GM12878 (cell line): ENCODE measurements at regions of chr20 and their contacts with region 1.

Region 1: GRCh38 chr20:63864847-63865640 is at the start of gene TPD52L2:
- DNase-seq: peak; percentile 94
- ATAC-seq: peak; percentile 91
- H3K4me3 ChIP-seq: peak within 1 kb of the TSS; percentile 96
- H3K27ac ChIP-seq: peak within 1 kb of the TSS; percentile 90
- H3K4me1 ChIP-seq: peaks cover 7% of the 10 kb centered on the region
- H3K27me3 ChIP-seq: no peaks in the 10 kb centered on the region
- CTCF ChIP-seq: no peak
- EP300 ChIP-seq: 0 out of 4 replicates have a peak, but pooled peaks of 1 of the 2 experiments have one; percentile 19
- POLR2A ChIP-seq: peak; percentile 96
- RAD21 ChIP-seq: no peak
- polyA plus RNA-seq, gene TPD52L2: 1.6 to 4.1 TPM

Region 2: GRCh38 chr20:63739130-63740069 is 125.6 kb before region 1 on chr20 and contains the start of gene SLC2A4RG:
- CTCF ChIA-PET with region 1: interaction called, 6 read pairs
- POLR2A ChIA-PET with region 1: interaction called, 4 read pairs
- RAD21 ChIA-PET with region 1: interaction called, 5 read pairs
- SMC1A ChIA-PET with region 1: no interaction called
- in situ Hi-C with region 1: no loop called
- intact Hi-C with region 1: loop called (anchors 2 kb)
- DNase-seq: no peak
- ATAC-seq: peak; percentile 55
- H3K4me3 ChIP-seq: peak within 1 kb of the TSS; percentile 84
- H3K27ac ChIP-seq: peak within 1 kb of the TSS; percentile 72
- H3K4me1 ChIP-seq: peaks cover 33% of the 10 kb centered on the region
- H3K27me3 ChIP-seq: no peaks in the 10 kb centered on the region
- CTCF ChIP-seq: no peak
- EP300 ChIP-seq: no peak
- POLR2A ChIP-seq: no peak
- RAD21 ChIP-seq: no peak
- polyA plus RNA-seq, gene SLC2A4RG: 0.34 to 2.8 TPM

Region 3: GRCh38 chr20:63785691-63786131 is 79.3 kb before region 1 on chr20:
- CTCF ChIA-PET with region 1: interaction called, 38 read pairs
- POLR2A ChIA-PET with region 1: no interaction called
- RAD21 ChIA-PET with region 1: interaction called, 18 read pairs
- SMC1A ChIA-PET with region 1: interaction called, 19 read pairs
- in situ Hi-C with region 1: no loop called
- intact Hi-C with region 1: loop called (anchors 2 kb)
- DNase-seq: no peak
- ATAC-seq: no peak
- H3K4me3 ChIP-seq: no peak overlapping the region
- H3K27ac ChIP-seq: no peak overlapping the region
- H3K4me1 ChIP-seq: peaks cover 8% of the 10 kb centered on the region
- H3K27me3 ChIP-seq: no peaks in the 10 kb centered on the region
- CTCF ChIP-seq: no peak
- EP300 ChIP-seq: no peak
- POLR2A ChIP-seq: no peak
- RAD21 ChIP-seq: no peak

Region 4: DNA sequence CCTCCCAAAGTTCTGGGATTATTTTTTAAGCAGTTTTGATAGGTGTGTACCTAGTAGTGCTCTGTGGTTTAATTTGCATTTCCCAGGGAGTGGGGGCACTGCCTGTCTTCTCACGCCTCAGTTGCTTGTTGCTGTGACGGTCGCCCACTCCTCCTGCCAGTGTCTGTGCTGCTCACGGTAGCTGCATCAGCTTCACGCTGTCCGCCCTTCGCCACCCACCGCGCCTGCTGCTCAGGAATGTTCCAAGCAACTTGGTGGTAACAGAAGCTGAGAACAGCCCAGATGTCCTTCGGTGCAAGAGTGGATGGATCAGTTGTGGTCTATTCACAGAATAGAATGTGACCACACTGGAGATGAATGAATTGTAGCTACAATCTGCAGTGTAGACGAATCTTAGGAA is 52.8 kb after region 1 on chr20:
- CTCF ChIA-PET with region 1: no interaction called
- POLR2A ChIA-PET with region 1: no interaction called
- RAD21 ChIA-PET with region 1: no interaction called
- SMC1A ChIA-PET with region 1: no interaction called
- in situ Hi-C with region 1: no loop called
- intact Hi-C with region 1: no loop called
- DNase-seq: no peak
- ATAC-seq: no peak
- H3K4me3 ChIP-seq: no peak overlapping the region
- H3K27ac ChIP-seq: peak overlapping the region; percentile 13; the same call in 1 of the 2 replicates
- H3K4me1 ChIP-seq: peaks cover 3% of the 10 kb centered on the region
- H3K27me3 ChIP-seq: no peaks in the 10 kb centered on the region
- CTCF ChIP-seq: no peak
- EP300 ChIP-seq: no peak
- POLR2A ChIP-seq: no peak
- RAD21 ChIP-seq: no peak